ENCODE measurements at regions of chrX and their contacts with region 1.

Region 1: GRCh38 chrX:79107891-79108718 is 36.4 kb upstream of the GPR174 start:
- DNase-seq: no peak
- ATAC-seq: peak; percentile 88
- H3K4me3 Mint-ChIP-seq: peak overlapping the region; percentile 52
- H3K27ac Mint-ChIP-seq: peak overlapping the region; percentile 95
- H3K4me1 Mint-ChIP-seq: peaks cover 42% of the 10 kb centered on the region
- H3K27me3 Mint-ChIP-seq: no peaks in the 10 kb centered on the region
- CTCF ChIP-seq: no peak

Region 2: GRCh38 chrX:79089896-79090584 is 18.1 kb before region 1 on chrX:
- CTCF ChIA-PET with region 1: no interaction called
- POLR2A ChIA-PET with region 1: interaction called, 15 read pairs
- intact Hi-C with region 1: loop called (anchors 2 kb)
- DNase-seq: no peak
- ATAC-seq: peak; percentile 74
- H3K4me3 Mint-ChIP-seq: peak overlapping the region; percentile 19
- H3K27ac Mint-ChIP-seq: peak overlapping the region; percentile 80
- H3K4me1 Mint-ChIP-seq: peaks cover 30% of the 10 kb centered on the region
- H3K27me3 Mint-ChIP-seq: no peaks in the 10 kb centered on the region
- CTCF ChIP-seq: no peak

Region 3: DNA sequence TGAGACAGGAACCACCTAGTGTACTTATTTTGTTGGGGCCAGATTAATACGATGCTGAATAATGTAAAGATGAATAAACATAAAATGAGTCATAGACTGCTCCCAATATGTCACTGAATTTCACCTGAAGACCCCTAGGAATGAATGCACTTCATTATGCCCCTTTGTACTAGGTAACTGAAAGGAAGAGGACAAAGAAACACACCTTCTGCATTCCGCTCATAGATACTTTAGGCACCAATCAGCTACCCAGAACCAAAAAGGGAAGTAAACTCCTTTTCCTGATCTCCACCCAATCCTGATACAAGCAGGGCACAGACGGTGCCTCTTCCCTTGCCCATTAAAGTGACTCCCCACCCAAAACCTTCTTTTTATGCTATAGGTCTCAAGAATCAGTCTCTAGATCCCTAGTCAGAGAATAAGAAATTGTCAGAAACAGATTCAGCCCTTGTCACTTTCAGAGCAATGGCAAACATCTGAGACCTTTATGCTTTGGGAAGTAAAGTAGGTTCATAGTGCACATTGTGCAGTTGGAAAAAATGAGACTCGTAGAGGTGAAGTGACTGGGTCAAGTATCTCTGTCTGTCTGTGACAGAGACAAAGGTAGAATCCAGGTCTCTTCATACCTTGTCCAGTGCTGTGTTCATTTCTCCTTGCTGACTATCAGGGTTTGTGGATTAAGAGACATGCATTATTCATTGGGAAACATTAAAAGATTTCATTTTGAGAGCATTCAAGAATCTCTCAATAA is 38.7 kb after region 1 on chrX:
- CTCF ChIA-PET with region 1: no interaction called
- POLR2A ChIA-PET with region 1: interaction called, 10 read pairs
- intact Hi-C with region 1: loop called (anchors 1 kb)
- DNase-seq: no peak
- ATAC-seq: peak; percentile 67
- H3K4me3 Mint-ChIP-seq: peak overlapping the region; percentile 90
- H3K27ac Mint-ChIP-seq: peak overlapping the region; percentile 94
- H3K4me1 Mint-ChIP-seq: peaks cover 59% of the 10 kb centered on the region
- H3K27me3 Mint-ChIP-seq: no peaks in the 10 kb centered on the region
- CTCF ChIP-seq: no peak

Region 4: GRCh38 chrX:79167462-79167861 is 59.4 kb after region 1 on chrX:
- CTCF ChIA-PET with region 1: no interaction called
- POLR2A ChIA-PET with region 1: interaction called, 10 read pairs
- intact Hi-C with region 1: loop called (anchors 5 kb)
- DNase-seq: no peak
- ATAC-seq: peak; percentile 35
- H3K4me3 Mint-ChIP-seq: peak overlapping the region; percentile 50
- H3K27ac Mint-ChIP-seq: peak overlapping the region; percentile 85
- H3K4me1 Mint-ChIP-seq: peaks cover 80% of the 10 kb centered on the region
- H3K27me3 Mint-ChIP-seq: no peaks in the 10 kb centered on the region
- CTCF ChIP-seq: no peak

Region 5: GRCh38 chrX:79300821-79301220 is 192.7 kb after region 1 on chrX:
- CTCF ChIA-PET with region 1: no interaction called
- POLR2A ChIA-PET with region 1: no interaction called
- intact Hi-C with region 1: no loop called
- DNase-seq: no peak
- ATAC-seq: no peak
- H3K4me3 Mint-ChIP-seq: no peak overlapping the region
- H3K27ac Mint-ChIP-seq: no peak overlapping the region
- H3K4me1 Mint-ChIP-seq: no peaks in the 10 kb centered on the region
- H3K27me3 Mint-ChIP-seq: no peaks in the 10 kb centered on the region
- CTCF ChIP-seq: no peak

Region 6: DNA sequence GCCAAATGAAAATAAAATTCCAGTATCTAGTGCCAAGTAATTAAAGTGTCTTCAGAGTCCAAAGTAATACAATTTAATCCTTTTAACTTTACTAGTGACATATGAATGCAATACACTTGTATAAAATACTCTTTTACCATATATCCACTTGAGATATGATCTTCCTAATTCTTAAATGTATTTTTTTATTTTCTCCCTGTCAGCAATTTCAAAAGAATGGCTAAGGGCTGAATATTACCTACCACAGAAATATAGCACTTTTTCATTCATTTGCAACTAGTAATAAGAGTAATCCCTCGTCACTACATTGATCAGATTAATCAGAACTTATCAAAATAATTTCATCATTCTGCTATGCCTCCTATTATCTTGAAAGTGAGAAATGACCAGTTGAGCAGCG is 896.4 kb after region 1 on chrX:
- CTCF ChIA-PET with region 1: no interaction called
- POLR2A ChIA-PET with region 1: no interaction called
- intact Hi-C with region 1: no loop called
- DNase-seq: no peak
- ATAC-seq: no peak
- H3K4me3 Mint-ChIP-seq: no peak overlapping the region
- H3K27ac Mint-ChIP-seq: no peak overlapping the region
- H3K4me1 Mint-ChIP-seq: no peaks in the 10 kb centered on the region
- H3K27me3 Mint-ChIP-seq: no peaks in the 10 kb centered on the region
- CTCF ChIP-seq: no peak

Measured in activated B cell treated with CpG ODN at 0.5 μM for 24 hours (primary cell).